OCI-LY7 (cell line): ENCODE measurements at regions of chr9 and their contacts with region 1.

Region 1: DNA sequence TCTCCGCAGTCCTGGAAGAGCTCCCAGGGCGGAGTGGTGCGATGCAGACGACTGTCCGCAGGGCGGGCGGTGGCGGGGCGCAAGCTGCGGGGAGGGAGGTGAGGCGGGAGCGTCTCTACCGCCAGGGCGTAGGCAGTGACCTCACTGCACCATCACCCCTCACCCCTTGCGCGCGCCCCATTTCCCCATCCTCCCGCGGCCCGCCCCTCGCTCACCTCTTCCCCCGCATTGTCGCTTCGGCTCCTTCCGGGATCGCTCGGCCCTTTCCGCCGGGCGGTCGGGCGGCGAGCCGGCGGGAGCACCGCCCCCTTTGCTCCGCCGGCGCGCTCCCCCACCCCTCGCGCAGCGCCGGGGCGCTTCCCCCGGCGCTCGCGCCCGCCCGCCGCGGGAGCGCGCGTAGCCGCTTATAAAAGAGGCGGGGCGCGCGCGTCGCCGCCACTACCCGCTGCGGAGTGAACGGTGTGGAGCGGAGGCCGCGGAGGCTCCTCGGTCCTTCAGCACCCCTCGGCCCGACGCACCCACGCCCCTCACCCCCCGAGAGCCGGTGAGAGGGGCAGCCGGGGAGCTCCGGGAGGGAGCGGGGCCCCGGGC is at the start of gene SPTAN1:
- DNase-seq: peak; percentile 94
- H3K4me3 ChIP-seq: peak within 1 kb of the TSS; percentile 87
- H3K27ac ChIP-seq: peak within 1 kb of the TSS; percentile 40
- H3K4me1 ChIP-seq: peaks cover 43% of the 10 kb centered on the region
- CTCF ChIP-seq: no peak
- total RNA-seq, gene SPTAN1: 259 and 272 TPM in 2 replicates

Region 2: DNA sequence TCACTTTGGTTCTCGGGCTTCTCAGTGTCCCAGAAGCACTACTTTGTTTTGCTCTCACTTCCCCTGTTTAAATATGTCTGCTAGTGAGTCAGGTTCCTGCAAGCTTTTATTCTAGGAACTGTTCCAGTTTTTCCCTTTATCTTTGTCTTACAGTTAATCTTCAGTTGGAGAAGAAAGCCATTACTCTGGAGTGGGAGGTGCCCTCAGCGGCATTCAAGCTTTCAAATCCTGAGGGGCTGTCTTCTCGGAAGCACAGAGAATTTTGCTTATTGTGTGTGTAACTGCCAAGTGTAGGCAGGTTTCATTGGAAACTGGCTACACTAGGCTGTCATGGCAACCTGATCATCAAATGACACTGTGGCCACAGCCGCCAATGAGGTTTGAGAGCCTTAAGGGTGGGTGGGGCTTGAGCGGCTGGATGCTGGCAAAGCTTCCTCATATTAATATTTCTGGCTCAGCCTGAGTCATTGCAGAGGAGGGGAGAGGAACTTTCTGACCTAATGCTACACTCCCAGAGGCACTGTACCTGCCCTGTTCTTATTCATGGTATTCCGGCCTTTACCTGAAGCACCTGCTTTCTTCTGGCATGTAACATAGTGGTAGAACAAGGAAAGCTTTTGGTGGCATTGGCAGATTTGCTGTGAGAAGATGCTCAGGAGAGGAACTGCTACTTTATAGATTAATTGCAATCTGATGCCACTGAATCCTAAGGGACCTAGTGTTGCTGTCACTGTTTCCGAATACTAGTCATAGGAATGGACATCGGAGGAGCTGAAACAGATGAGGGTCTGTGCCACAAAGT is 457.9 kb before region 1 on chr9:
- CTCF ChIA-PET with region 1: no interaction called
- POLR2A ChIA-PET with region 1: no interaction called
- intact Hi-C with region 1: no loop called
- DNase-seq: peak; percentile 58
- H3K4me3 ChIP-seq: no peak overlapping the region
- H3K27ac ChIP-seq: no peak overlapping the region
- H3K4me1 ChIP-seq: peaks cover 23% of the 10 kb centered on the region
- CTCF ChIP-seq: no peak

Region 3: GRCh38 chr9:128438343-128439109 is 113.7 kb before region 1 on chr9:
- CTCF ChIA-PET with region 1: no interaction called
- POLR2A ChIA-PET with region 1: interaction called, 4 read pairs
- intact Hi-C with region 1: loop called (anchors 2 kb)
- DNase-seq: peak; percentile 86
- H3K4me3 ChIP-seq: no peak overlapping the region
- H3K27ac ChIP-seq: no peak overlapping the region
- H3K4me1 ChIP-seq: peaks cover 3% of the 10 kb centered on the region
- CTCF ChIP-seq: peak; percentile 88

Region 4: DNA sequence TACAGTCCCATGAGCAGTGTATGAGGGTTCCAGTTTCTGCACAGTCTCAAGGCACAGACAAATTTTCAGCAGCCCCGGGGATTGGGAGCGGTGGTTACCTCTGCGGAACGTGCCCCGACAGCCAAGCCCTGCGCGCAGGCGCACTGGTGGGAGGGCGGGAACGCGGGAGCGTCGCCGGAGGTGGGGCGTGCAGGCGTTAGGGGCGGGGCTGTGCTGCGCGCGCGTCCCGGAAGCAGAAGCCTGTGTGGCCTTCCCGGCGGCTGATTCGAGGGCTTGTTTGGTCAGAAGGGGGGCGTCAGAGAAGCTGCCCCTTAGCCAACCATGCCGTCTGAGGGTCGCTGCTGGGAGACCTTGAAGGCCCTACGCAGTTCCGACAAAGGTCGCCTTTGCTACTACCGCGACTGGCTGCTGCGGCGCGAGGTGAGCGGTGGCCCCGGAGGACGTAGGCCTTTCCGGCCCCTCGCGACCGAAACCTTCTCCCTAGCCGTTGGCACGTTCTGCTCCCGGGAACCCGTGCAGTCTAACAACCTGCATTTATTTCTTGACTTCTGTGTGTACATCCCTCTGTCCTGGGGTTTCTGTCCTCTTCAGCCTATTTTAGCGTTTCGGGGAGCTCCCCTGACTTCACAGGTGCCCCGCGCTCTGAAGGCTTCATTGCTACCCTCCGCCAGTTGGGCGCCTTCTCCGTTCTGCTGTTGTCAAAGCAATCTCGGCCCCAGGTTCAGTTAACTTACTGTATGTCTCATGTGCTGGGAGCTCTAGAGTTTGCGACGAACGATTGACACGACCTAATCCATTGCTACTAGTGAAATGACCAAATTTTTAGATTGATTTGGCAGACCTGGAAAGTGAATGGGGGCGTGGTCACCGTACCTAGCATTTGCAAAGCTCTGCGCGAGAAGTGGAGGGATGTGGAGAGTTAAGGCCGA is 47.5 kb before region 1 on chr9 and contains the start of gene GLE1:
- CTCF ChIA-PET with region 1: no interaction called
- POLR2A ChIA-PET with region 1: interaction called, 5 read pairs
- intact Hi-C with region 1: loop called (anchors 1 kb)
- DNase-seq: peak; percentile 95
- H3K4me3 ChIP-seq: peak within 1 kb of the TSS; percentile 82
- H3K27ac ChIP-seq: peak within 1 kb of the TSS; percentile 38
- H3K4me1 ChIP-seq: peaks cover 13% of the 10 kb centered on the region
- CTCF ChIP-seq: 0 out of 2 replicates have a peak, but pooled peaks have one; percentile 26
- total RNA-seq, gene GLE1: 30.8 and 34.8 TPM in 2 replicates

Region 5: DNA sequence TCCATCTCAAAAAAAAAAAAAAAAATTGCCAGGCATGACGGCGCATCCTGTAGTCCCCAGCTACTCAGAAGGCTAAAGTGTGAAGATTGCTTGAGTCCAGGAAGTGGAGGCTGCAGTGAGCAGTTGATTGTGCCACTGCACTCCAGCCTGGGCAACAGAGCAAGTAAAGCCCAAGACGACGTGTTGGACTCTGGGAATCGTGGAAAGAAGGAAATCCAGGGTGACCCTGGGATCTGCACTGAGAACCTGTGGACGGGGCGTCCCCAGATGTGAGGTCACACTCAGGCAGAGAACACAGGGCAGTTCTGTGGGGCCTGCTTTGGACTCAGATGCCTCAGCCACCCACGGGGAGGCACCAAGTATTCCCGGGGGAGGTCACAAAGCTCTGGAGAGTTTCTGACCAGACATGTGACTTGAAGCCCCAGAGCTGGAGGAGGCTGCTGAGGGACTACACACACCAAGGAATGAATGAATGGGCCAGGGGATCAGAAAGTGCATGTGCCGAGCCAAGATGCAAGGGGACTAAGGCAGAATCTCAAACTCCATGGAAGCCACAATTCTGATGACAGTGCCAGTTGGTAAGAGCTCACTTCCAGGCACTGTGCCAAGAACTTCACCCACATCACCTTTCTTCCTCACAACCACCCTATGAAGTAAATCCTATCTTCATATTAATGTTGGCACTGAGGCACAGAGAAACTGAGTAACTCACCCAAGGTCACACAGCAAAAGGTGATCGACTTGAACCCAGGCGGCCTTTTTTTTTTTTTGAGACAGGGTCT is 91.5 kb after region 1 on chr9:
- CTCF ChIA-PET with region 1: no interaction called
- POLR2A ChIA-PET with region 1: no interaction called
- intact Hi-C with region 1: no loop called
- DNase-seq: peak; percentile 89
- H3K4me3 ChIP-seq: peak overlapping the region; percentile 42
- H3K27ac ChIP-seq: peak overlapping the region; percentile 87
- H3K4me1 ChIP-seq: peaks cover 27% of the 10 kb centered on the region
- CTCF ChIP-seq: no peak

Region 6: DNA sequence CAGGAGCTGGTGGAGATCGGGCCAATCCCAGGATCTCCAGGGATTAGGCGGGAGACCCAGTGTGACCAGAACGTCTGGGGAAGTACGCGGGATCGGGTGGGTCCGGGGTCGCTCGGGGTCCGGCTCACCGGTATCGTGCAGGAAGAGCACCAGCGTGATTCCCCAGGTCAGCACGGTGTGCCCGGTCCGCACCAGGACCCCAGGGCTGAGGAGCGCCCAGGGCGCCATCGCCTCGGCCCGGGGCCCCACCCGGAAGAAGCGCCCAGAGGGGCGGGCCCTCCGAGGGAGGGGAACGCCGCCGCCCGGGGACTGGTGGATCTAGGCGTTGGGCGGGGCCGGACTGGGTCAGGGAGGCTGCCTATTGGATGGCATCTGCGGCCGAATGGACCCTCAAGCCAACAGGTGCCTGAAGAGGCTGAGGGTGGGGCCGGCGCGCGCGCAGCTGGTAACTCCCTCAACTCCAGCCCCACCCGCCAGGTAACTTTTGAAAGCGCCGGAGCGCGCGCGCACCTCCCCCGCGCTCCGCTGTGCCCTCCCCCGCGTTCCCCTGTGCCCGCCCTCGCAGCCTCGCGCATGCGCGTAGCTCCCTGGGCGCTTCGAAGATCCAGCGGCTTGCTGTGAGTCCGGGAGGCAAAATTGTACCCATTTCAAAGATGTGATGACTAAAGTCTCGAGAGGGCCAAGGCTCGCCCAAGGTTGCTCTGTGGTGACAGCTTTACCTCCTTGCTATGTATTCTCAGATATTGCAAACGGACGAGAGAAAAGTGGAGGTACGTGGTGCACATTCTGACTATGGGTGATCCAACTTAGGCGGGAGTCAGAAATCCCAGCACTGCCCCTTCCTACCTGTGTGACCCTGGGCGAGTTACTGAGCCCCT is 171.9 kb after region 1 on chr9 and contains the start of gene ZDHHC12:
- CTCF ChIA-PET with region 1: no interaction called
- POLR2A ChIA-PET with region 1: interaction called, 4 read pairs
- intact Hi-C with region 1: loop called (anchors 10 kb)
- DNase-seq: peak; percentile 100
- H3K4me3 ChIP-seq: peak within 1 kb of the TSS; percentile 90
- H3K27ac ChIP-seq: peak within 1 kb of the TSS; percentile 26
- H3K4me1 ChIP-seq: peaks cover 29% of the 10 kb centered on the region
- CTCF ChIP-seq: no peak
- total RNA-seq, gene ZDHHC12: 29.0 and 56.8 TPM in 2 replicates

Region 7: DNA sequence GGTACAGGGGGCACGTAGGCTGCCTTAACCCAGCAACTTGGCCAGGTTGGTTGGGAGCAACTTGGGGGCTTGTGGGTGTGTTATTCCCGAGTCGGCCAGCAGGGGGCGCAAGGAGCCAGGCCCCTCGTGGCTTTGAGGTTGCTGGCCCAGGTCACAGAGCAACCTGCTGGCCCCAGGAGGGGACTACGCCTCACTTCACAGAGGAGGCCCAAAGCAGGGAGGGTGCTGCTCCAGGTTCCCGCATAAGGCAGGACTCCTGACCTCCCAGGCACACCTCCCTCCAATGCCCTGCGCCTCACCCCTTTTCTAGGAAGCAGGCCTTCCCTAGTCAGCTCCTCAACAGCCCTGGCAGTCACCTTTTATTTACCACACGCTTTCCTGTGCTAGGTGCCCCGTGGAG is 311.4 kb after region 1 on chr9:
- CTCF ChIA-PET with region 1: no interaction called
- POLR2A ChIA-PET with region 1: no interaction called
- intact Hi-C with region 1: no loop called
- DNase-seq: peak; percentile 80
- H3K4me3 ChIP-seq: no peak overlapping the region
- H3K27ac ChIP-seq: no peak overlapping the region
- H3K4me1 ChIP-seq: peaks cover 4% of the 10 kb centered on the region
- CTCF ChIP-seq: peak; percentile 88

Region 8: DNA sequence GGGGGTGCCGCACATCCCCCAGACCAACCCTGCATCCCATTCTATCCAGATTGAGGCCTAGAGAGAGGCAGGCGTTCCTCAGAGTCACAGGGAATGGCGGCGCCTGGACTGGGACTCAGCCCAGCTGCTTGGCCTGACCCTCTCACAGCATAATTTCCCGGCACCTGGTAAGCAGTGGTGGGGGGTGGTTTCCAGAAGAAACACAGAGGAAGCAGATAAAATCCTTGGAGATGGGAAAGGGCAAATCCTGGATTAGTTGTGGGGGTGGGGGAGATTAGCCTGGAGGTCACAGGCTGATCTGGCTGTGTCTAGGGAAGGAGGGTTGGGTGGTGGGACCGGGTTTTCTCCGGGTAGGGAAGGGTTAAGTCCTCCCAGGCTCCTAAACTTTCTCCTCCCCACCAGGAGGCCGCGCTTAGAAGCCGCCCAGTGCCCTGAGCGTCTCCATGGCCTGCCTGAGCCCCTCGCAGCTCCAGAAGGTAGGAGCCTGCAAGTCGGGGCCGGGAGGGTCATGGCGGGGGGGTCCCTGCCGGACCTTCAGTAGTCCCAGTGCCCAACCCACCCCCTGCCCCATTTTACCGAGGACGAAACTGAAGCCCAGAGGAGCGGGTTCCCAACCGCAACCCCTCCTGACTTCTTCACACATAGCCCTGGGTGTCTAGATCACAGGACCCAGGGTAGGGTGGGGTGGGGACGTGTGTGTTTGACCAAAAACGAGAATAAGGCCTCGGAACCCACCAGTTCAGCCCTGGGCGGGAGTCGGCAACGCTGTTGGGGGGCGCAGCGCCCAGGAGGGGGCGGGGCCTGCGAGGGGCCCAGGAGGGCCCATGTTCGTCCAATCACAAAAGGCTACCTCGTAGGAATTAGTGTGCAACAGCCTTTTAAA is 369.9 kb after region 1 on chr9:
- CTCF ChIA-PET with region 1: no interaction called
- POLR2A ChIA-PET with region 1: no interaction called
- intact Hi-C with region 1: loop called (anchors 5 kb)
- DNase-seq: peak; percentile 86
- H3K4me3 ChIP-seq: peak overlapping the region; percentile 79
- H3K27ac ChIP-seq: peak overlapping the region; percentile 98
- H3K4me1 ChIP-seq: peaks cover 37% of the 10 kb centered on the region
- CTCF ChIP-seq: no peak